Mammary epithelial cell (primary cell): ENCODE measurements at regions of chr2 and their contacts with region 1.

Region 1: GRCh38 chr2:130355578-130356431 is at the start of gene PTPN18:
- DNase-seq: peak; percentile 82
- H3K4me3 ChIP-seq: peak within 1 kb of the TSS; percentile 54 to 81 (median 72)
- H3K27ac ChIP-seq: no peak within 1 kb of the TSS
- H3K4me1 ChIP-seq: peaks cover 5% of the 10 kb centered on the region
- H3K27me3 ChIP-seq: no peaks in the 10 kb centered on the region
- CTCF ChIP-seq: peak; percentile 10 to 41
- total RNA-seq, gene PTPN18: 18.8 to 39.5 TPM

Region 2: GRCh38 chr2:130162968-130163367 is 192.8 kb before region 1 on chr2:
- CTCF ChIA-PET with region 1: interaction called, 23 read pairs
- dilution Hi-C with region 1: no loop called
- in situ Hi-C with region 1: no loop called
- intact Hi-C with region 1: no loop called
- DNase-seq: no peak
- H3K4me3 ChIP-seq: no peak overlapping the region
- H3K27ac ChIP-seq: no peak overlapping the region
- H3K4me1 ChIP-seq: no peaks in the 10 kb centered on the region
- H3K27me3 ChIP-seq: no peaks in the 10 kb centered on the region
- CTCF ChIP-seq: no peak

Region 3: GRCh38 chr2:130342533-130343275 is 13.1 kb before region 1 on chr2 and contains the start of gene IMP4:
- CTCF ChIA-PET with region 1: interaction called, 4 read pairs
- dilution Hi-C with region 1: no loop called
- in situ Hi-C with region 1: no loop called
- intact Hi-C with region 1: loop called (anchors 1 kb)
- DNase-seq: peak; percentile 99
- H3K4me3 ChIP-seq: peak within 1 kb of the TSS; percentile 75 to 89 (median 87)
- H3K27ac ChIP-seq: peak within 1 kb of the TSS; percentile 77
- H3K4me1 ChIP-seq: peaks cover 11% of the 10 kb centered on the region
- H3K27me3 ChIP-seq: no peaks in the 10 kb centered on the region
- CTCF ChIP-seq: peak in 1 of 2 donors; percentile 55
- total RNA-seq, gene IMP4: 81.6 to 83.9 TPM

Region 4: DNA sequence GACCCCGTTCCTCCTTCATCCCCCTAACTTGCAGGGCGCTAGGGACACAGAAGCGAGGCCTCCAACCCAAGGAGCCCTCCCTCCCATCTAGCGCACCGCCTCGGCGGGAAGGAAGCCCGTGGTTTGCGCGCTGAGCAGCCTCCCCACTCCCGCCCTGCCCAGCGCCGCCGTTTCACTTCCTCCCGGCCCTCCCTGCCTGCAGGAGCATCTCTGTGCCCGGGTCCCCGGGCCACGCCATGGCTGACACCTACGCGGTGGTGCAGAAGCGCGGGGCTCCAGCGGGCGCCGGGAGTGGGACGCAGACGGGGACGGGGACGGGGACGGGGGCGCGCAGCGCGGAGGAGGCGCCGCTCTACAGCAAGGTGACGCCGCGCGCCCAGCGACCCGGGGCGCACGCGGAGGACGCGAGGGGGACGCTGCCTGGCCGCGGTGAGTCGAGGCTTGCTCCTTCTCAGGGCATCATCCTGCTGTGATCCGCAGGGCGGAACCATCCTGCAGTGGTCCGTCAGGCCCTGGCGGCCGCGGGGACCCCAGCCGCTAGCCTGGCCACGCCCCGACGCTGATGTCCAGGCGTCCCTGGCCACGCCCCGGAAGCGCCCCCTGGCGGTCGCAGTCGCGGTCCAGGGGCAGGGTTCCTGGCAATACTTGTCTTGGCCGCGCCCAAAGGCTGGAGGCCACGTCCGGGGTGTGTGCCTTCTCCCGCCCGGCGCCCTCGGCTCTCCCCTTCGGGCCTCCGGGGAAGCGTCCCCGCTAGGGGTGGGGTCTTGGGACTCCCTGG is 16.4 kb after region 1 on chr2:
- CTCF ChIA-PET with region 1: interaction called, 3 read pairs
- dilution Hi-C with region 1: no loop called
- in situ Hi-C with region 1: no loop called
- intact Hi-C with region 1: loop called (anchors 2 kb)
- DNase-seq: peak; percentile 76
- H3K4me3 ChIP-seq: peak overlapping the region; percentile 85 to 91 (median 86)
- H3K27ac ChIP-seq: peak overlapping the region; percentile 56
- H3K4me1 ChIP-seq: peaks cover 21% of the 10 kb centered on the region
- H3K27me3 ChIP-seq: no peaks in the 10 kb centered on the region
- CTCF ChIP-seq: peak; percentile 63 to 85

Region 5: DNA sequence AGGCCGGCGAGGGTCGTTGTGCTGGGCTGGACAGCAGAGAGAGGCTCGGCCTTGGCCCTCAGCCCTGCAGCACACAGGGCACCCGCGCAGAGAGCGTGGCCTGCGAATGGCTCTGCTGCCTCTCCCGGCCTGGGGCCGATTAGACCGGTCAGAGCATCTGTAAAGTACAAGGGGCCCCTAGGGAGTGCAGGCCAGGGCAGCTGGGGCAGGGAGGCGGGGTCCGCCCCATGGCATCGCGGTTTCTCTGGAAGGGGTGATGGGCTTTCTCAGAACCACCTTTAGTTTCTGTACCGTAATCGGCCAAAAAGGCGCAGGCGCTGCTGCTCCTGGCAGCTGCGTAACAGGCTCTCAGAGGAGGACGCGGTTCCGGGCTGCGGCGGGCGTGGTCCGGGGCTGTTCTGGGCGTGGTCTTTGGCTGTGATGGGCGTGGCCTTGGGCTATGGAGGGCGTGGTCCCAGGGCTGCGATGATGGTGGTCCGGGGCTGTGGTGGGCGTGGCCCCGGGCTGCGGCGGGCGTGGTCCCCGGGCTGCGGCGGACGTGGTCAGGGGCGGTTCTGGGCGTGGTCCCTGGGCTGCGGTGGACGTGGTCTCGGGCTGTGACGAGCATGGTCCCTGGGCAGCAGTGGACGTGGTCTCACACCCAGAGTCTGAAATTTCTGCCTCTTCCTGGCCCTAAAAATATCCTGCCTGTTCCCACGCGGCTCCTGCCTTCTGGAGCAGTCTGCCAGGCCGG is 371.6 kb after region 1 on chr2:
- CTCF ChIA-PET with region 1: no interaction called
- dilution Hi-C with region 1: no loop called
- in situ Hi-C with region 1: loop called in 1 of 2 experiments (anchors 25 kb)
- intact Hi-C with region 1: no loop called
- DNase-seq: peak; percentile 73
- H3K4me3 ChIP-seq: peak overlapping the region; percentile 61 to 66 (median 63)
- H3K27ac ChIP-seq: peak overlapping the region; percentile 41
- H3K4me1 ChIP-seq: peaks cover 20% of the 10 kb centered on the region
- H3K27me3 ChIP-seq: no peaks in the 10 kb centered on the region
- CTCF ChIP-seq: no peak